ENCODE measurements at regions of chr5 and their contacts with region 1.

Region 1: DNA sequence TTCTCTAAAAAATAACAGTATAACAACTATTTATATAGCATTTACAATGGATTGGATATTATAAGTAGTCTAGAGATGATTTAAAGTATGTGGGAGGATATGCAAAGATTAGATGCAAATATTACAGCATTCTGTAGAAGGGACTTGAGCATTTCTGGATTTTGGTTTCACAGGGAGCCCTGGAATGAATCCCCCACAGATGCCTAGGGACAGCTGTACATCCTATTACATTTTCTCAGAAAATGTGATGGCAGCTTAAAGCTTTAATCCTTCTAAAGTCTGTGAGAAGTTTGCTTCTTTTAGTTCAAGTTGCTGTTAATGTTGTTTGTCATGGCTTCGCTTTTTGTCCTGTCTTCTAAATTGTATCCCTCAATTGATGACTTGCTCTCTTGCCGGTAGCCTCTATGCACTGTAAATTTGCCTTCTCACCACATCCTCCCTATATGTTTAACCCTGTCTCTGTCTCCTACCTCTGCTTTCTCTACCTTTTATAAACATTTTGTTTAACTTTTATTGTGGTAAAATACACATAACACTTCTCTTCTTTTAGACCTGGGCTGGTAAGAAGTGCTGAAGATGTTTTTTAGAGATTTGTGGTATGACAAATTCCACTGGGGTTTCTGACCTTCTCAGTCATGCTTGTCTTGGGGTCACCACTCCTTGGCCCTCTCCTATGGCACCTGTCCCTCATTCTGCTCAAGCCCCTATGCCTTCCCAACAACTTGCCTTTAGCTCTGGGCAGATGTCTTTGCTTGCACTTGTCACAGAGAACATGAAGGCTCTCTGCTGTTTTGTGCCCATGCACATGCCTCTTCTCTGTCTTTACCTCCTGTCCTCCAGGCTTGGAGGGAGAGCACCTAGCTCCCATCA is 37.9 kb downstream of the LNPEP start:
- DNase-seq: peak in 2 of 14 experiments; percentile 31 to 53
- ATAC-seq: peak; percentile 92
- H3K4me3 ChIP-seq: peak overlapping the region; percentile 18
- H3K4me3 Mint-ChIP-seq: peak overlapping the region; percentile 53
- H3K27ac ChIP-seq: no peak overlapping the region
- H3K27ac Mint-ChIP-seq: peak overlapping the region; percentile 67
- H3K4me1 ChIP-seq: peaks cover 32% of the 10 kb centered on the region
- H3K4me1 Mint-ChIP-seq: peaks cover 88% of the 10 kb centered on the region
- H3K27me3 ChIP-seq: no peaks in the 10 kb centered on the region
- H3K27me3 Mint-ChIP-seq: no peaks in the 10 kb centered on the region
- CTCF ChIP-seq: no peak

Region 2: DNA sequence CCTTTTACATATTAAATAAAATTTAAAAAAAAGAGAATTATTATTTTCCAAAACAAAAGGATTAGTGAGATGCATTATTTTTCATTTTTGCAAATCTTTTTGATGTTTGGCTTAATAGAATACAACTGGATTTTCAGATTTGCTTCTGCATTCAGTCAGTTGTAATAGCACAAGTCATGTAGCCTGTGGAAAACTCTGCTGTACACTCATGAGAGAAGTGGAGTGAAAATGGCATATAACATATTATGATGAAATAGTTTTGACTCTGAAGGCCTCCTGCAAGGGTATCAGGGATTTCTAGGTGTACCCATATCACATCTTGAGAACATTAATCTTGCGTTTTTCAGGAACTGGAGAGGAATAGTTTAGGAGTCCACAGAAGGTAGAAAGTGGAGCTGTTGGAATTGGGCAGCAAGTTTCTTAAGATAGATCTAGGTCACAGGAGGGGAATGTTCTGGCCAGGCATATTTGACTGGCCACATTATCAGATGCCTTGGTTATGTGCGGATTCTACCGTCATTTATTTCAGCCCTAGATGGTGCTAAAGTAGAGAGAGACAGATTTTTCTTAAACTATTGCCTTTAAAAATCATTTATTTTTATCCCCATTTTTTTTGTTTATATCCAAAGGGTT is 21.5 kb before region 1 on chr5:
- CTCF ChIA-PET with region 1: no interaction called
- POLR2A ChIA-PET with region 1: no interaction called
- intact Hi-C with region 1: no loop called
- DNase-seq: no peak
- ATAC-seq: no peak
- H3K4me3 ChIP-seq: no peak overlapping the region
- H3K4me3 Mint-ChIP-seq: no peak overlapping the region
- H3K27ac ChIP-seq: no peak overlapping the region
- H3K27ac Mint-ChIP-seq: peak overlapping the region; percentile 66
- H3K4me1 ChIP-seq: peaks cover 19% of the 10 kb centered on the region
- H3K4me1 Mint-ChIP-seq: peaks cover 76% of the 10 kb centered on the region
- H3K27me3 ChIP-seq: no peaks in the 10 kb centered on the region
- H3K27me3 Mint-ChIP-seq: no peaks in the 10 kb centered on the region
- CTCF ChIP-seq: no peak

Region 3: DNA sequence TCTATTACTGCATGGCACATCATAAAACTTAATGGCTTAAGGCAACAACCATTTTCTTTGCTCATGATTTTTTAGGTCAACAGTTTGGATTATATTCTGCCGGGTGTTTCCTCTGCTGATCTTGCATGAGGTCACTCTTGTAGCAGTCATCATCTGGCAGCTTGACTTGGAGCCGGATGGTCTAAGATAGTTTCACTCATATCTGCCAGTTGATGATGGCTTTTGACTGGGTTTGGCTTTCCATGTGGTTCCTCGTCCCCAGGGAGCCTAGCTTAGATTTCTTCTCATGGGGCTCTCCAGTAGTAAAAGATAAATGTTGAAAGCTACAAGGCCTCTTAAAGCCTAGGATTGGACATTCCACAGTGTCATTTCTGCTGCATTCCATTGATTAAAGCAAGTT is 10.5 kb before region 1 on chr5:
- CTCF ChIA-PET with region 1: interaction called, 3 read pairs
- POLR2A ChIA-PET with region 1: interaction called, 5 read pairs
- intact Hi-C with region 1: loop called in 1 of 2 experiments (anchors 2 kb)
- DNase-seq: peak in 4 of 14 experiments; percentile 32 to 54 (median 40)
- ATAC-seq: peak; percentile 32
- H3K4me3 ChIP-seq: no peak overlapping the region
- H3K4me3 Mint-ChIP-seq: peak overlapping the region; percentile 81
- H3K27ac ChIP-seq: peak overlapping the region; percentile 68 to 70
- H3K27ac Mint-ChIP-seq: peak overlapping the region; percentile 91
- H3K4me1 ChIP-seq: peaks cover 38% of the 10 kb centered on the region
- H3K4me1 Mint-ChIP-seq: peaks cover 94% of the 10 kb centered on the region
- H3K27me3 ChIP-seq: no peaks in the 10 kb centered on the region
- H3K27me3 Mint-ChIP-seq: no peaks in the 10 kb centered on the region
- CTCF ChIP-seq: no peak

Region 4: DNA sequence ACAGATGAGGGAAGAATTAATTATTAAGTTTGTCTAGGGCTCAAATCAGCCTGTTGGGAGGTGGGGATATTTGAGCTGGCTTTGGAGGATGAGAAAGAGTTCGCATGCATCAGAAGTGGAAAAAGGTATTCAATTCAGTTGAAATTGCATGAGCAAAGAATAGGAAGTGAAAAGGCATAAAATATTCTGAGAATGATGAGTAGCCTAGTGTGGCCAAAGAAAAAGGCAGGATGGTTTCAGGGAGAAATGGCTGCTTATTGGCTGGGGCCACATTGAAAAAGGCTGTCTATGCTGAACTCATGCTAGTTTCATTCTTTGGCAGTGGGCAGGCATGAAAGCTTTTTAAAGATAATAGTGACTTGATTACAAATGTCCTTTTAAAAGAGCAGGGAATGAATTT is 444.7 kb after region 1 on chr5:
- CTCF ChIA-PET with region 1: no interaction called
- POLR2A ChIA-PET with region 1: no interaction called
- intact Hi-C with region 1: no loop called
- DNase-seq: no peak
- ATAC-seq: no peak
- H3K4me3 ChIP-seq: no peak overlapping the region
- H3K4me3 Mint-ChIP-seq: no peak overlapping the region
- H3K27ac ChIP-seq: no peak overlapping the region
- H3K27ac Mint-ChIP-seq: no peak overlapping the region
- H3K4me1 ChIP-seq: no peaks in the 10 kb centered on the region
- H3K4me1 Mint-ChIP-seq: no peaks in the 10 kb centered on the region
- H3K27me3 ChIP-seq: no peaks in the 10 kb centered on the region
- H3K27me3 Mint-ChIP-seq: no peaks in the 10 kb centered on the region
- CTCF ChIP-seq: no peak

Measured in CD4-positive, alpha-beta T cell (primary cell).